ENCODE measurements at regions of chr7 and their contacts with region 1.

Region 1: DNA sequence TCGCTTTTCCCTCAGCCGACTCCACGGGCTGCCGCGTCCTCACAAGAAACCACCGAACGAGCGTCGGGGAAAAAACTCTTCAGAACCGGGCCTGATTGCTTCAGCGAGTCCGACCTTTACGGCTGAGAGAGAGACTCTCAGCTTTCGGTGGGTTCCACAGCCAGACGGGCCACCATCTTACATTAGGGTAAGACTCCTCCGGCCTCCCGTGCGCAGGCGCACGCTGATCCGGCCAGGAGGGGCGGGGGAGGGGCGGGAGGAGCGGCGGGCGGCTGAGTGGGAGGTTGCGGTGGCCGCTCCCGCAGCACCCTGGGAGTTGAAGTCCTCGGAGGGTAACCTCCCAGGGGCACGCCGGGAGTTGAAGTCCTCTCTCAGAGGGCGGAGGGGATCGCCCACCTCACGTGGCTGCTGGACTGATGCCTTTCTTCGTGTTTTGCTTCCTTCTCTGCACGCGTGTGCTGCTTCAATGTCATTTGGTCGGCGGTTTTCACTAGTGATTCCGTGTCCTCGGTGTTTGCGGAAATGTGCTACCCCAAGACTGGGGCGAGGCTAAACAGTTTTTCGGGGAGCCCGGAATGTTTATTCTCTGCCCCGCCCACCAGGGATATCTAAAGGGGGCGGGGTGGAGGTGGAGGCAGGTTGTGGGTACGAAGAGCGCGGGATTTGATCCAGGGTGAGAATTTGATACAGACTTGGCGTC is at the start of gene CNOT4:
- DNase-seq: peak; percentile 82 to 97 (median 92)
- ATAC-seq: peak; percentile 96
- H3K4me3 ChIP-seq: peak within 1 kb of the TSS; percentile 78
- H3K4me3 Mint-ChIP-seq: no peak within 1 kb of the TSS
- H3K27ac ChIP-seq: peak within 1 kb of the TSS; percentile 97
- H3K27ac Mint-ChIP-seq: no peak within 1 kb of the TSS
- H3K4me1 ChIP-seq: peaks cover 12 to 15% of the 10 kb centered on the region in 2 donors
- H3K4me1 Mint-ChIP-seq: peaks cover 3 to 21% (median 14%) of the 10 kb centered on the region in 7 donors
- H3K27me3 ChIP-seq: no peaks in the 10 kb centered on the region
- H3K27me3 Mint-ChIP-seq: no peaks in the 10 kb centered on the region
- total RNA-seq, gene CNOT4: 28.7 to 39.4 (median 38.3) TPM

Region 2: GRCh38 chr7:134458806-134459698 is 1051.0 kb before region 1 on chr7 and contains the start of gene AKR1B1:
- CTCF ChIA-PET with region 1: no interaction called
- POLR2A ChIA-PET with region 1: interaction called, 3 read pairs
- intact Hi-C with region 1: loop called (anchors 1 to 10 kb)
- DNase-seq: peak; percentile 76 to 88 (median 84)
- ATAC-seq: peak; percentile 94
- H3K4me3 ChIP-seq: peak within 1 kb of the TSS; percentile 78
- H3K4me3 Mint-ChIP-seq: peak within 1 kb of the TSS; percentile 71 to 94 (median 89)
- H3K27ac ChIP-seq: peak within 1 kb of the TSS; percentile 72
- H3K27ac Mint-ChIP-seq: peak within 1 kb of the TSS; percentile 80 to 92 (median 84)
- H3K4me1 ChIP-seq: peaks cover 20 to 30% of the 10 kb centered on the region in 2 donors
- H3K4me1 Mint-ChIP-seq: peaks cover 30 to 55% (median 48%) of the 10 kb centered on the region in 7 donors
- H3K27me3 ChIP-seq: no peaks in the 10 kb centered on the region
- H3K27me3 Mint-ChIP-seq: no peaks in the 10 kb centered on the region
- total RNA-seq, gene AKR1B1: 62.2 to 108 (median 100) TPM

Region 3: GRCh38 chr7:135147899-135148721 is 361.9 kb before region 1 on chr7 and contains the start of gene TMEM140:
- CTCF ChIA-PET with region 1: no interaction called
- POLR2A ChIA-PET with region 1: no interaction called
- intact Hi-C with region 1: loop called in 1 of 2 experiments (anchors 1 kb)
- DNase-seq: peak in 8 of 9 donors; percentile 56 to 88 (median 80)
- ATAC-seq: peak; percentile 84
- H3K4me3 ChIP-seq: peak within 1 kb of the TSS; percentile 71
- H3K4me3 Mint-ChIP-seq: peak within 1 kb of the TSS; percentile 83 to 95 (median 92)
- H3K27ac ChIP-seq: peak within 1 kb of the TSS; percentile 90
- H3K27ac Mint-ChIP-seq: peak within 1 kb of the TSS; percentile 93 to 99 (median 97)
- H3K4me1 ChIP-seq: peaks cover 31 to 38% of the 10 kb centered on the region in 2 donors
- H3K4me1 Mint-ChIP-seq: peaks cover 41 to 74% (median 70%) of the 10 kb centered on the region in 7 donors
- H3K27me3 ChIP-seq: no peaks in the 10 kb centered on the region
- H3K27me3 Mint-ChIP-seq: no peaks in the 10 kb centered on the region
- total RNA-seq, gene TMEM140: 17.8 to 44.7 (median 20.4) TPM

Region 4: GRCh38 chr7:135414850-135415439 is 95.1 kb before region 1 on chr7:
- CTCF ChIA-PET with region 1: no interaction called
- POLR2A ChIA-PET with region 1: no interaction called
- intact Hi-C with region 1: loop called in 1 of 2 experiments (anchors 2 kb)
- DNase-seq: peak in 4 of 9 donors; percentile 1 to 7 (median 5)
- ATAC-seq: peak; percentile 49
- H3K4me3 ChIP-seq: no peak overlapping the region
- H3K4me3 Mint-ChIP-seq: no peak overlapping the region
- H3K27ac ChIP-seq: no peak overlapping the region
- H3K27ac Mint-ChIP-seq: no peak overlapping the region
- H3K4me1 ChIP-seq: no peaks in the 10 kb centered on the region
- H3K4me1 Mint-ChIP-seq: peaks cover 0 to 19% (median 5%) of the 10 kb centered on the region in 7 donors
- H3K27me3 ChIP-seq: no peaks in the 10 kb centered on the region
- H3K27me3 Mint-ChIP-seq: no peaks in the 10 kb centered on the region

Region 5: GRCh38 chr7:135645296-135645904 is 135.3 kb after region 1 on chr7:
- CTCF ChIA-PET with region 1: interaction called, 4 read pairs
- POLR2A ChIA-PET with region 1: no interaction called
- intact Hi-C with region 1: loop called (anchors 1 kb)
- DNase-seq: peak in 7 of 9 donors; percentile 8 to 50 (median 41)
- ATAC-seq: peak; percentile 88
- H3K4me3 ChIP-seq: no peak overlapping the region
- H3K4me3 Mint-ChIP-seq: no peak overlapping the region
- H3K27ac ChIP-seq: no peak overlapping the region
- H3K27ac Mint-ChIP-seq: peak overlapping the region in 4 of 9 donors; percentile 1 to 27 (median 20)
- H3K4me1 ChIP-seq: no peaks in the 10 kb centered on the region
- H3K4me1 Mint-ChIP-seq: peaks cover 0 to 7% (median 0%) of the 10 kb centered on the region in 7 donors
- H3K27me3 ChIP-seq: no peaks in the 10 kb centered on the region
- H3K27me3 Mint-ChIP-seq: no peaks in the 10 kb centered on the region